CD4-positive, alpha-beta T cell (primary cell): ENCODE measurements at regions of chr6 and their contacts with region 1.

Region 1: GRCh38 chr6:152184917-152185574 is 377.6 kb downstream of the ESR1 start:
- DNase-seq: peak in 7 of 14 experiments; percentile 4 to 78 (median 42)
- ATAC-seq: peak; percentile 75
- H3K4me3 ChIP-seq: peak overlapping the region; percentile 56
- H3K4me3 Mint-ChIP-seq: peak overlapping the region; percentile 96
- H3K27ac ChIP-seq: peak overlapping the region; percentile 81 to 90
- H3K27ac Mint-ChIP-seq: peak overlapping the region; percentile 97
- H3K4me1 ChIP-seq: peaks cover 26% of the 10 kb centered on the region
- H3K4me1 Mint-ChIP-seq: peaks cover 88% of the 10 kb centered on the region
- H3K27me3 ChIP-seq: no peaks in the 10 kb centered on the region
- H3K27me3 Mint-ChIP-seq: no peaks in the 10 kb centered on the region
- CTCF ChIP-seq: no peak

Region 2: DNA sequence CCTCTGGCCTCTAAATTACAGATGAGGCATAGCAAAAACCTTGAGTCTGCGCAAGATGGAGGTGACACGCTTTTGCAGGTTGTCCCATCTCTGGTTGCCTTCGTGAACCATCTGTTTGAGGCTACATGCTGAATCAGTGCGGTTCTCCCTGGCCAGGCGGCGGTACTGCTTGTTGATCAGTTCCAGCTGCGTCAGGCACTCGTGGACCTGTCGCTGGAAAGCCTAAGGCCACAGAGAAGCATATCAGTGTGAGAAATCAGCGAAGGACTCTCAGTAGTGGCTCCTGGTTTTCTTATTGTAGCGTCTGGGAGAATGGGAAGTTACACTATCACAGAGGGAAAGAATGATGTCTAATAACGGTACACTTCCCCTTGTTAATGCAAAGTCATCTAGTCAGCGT is 33.1 kb before region 1 on chr6:
- CTCF ChIA-PET with region 1: no interaction called
- POLR2A ChIA-PET with region 1: interaction called, 15 read pairs
- intact Hi-C with region 1: no loop called
- DNase-seq: no peak
- ATAC-seq: no peak
- H3K4me3 ChIP-seq: no peak overlapping the region
- H3K4me3 Mint-ChIP-seq: no peak overlapping the region
- H3K27ac ChIP-seq: no peak overlapping the region
- H3K27ac Mint-ChIP-seq: peak overlapping the region; percentile 47
- H3K4me1 ChIP-seq: no peaks in the 10 kb centered on the region
- H3K4me1 Mint-ChIP-seq: no peaks in the 10 kb centered on the region
- H3K27me3 ChIP-seq: no peaks in the 10 kb centered on the region
- H3K27me3 Mint-ChIP-seq: no peaks in the 10 kb centered on the region
- CTCF ChIP-seq: no peak

Region 3: GRCh38 chr6:152170705-152171667 is 14.1 kb before region 1 on chr6:
- CTCF ChIA-PET with region 1: interaction called, 4 read pairs
- POLR2A ChIA-PET with region 1: interaction called, 69 read pairs
- intact Hi-C with region 1: loop called in 1 of 2 experiments (anchors 2 kb)
- DNase-seq: peak in 9 of 14 experiments; percentile 19 to 80 (median 41)
- ATAC-seq: peak; percentile 85
- H3K4me3 ChIP-seq: peak overlapping the region; percentile 26
- H3K4me3 Mint-ChIP-seq: peak overlapping the region; percentile 62
- H3K27ac ChIP-seq: peak overlapping the region; percentile 46 to 80
- H3K27ac Mint-ChIP-seq: peak overlapping the region; percentile 91
- H3K4me1 ChIP-seq: peaks cover 29% of the 10 kb centered on the region
- H3K4me1 Mint-ChIP-seq: peaks cover 74% of the 10 kb centered on the region
- H3K27me3 ChIP-seq: no peaks in the 10 kb centered on the region
- H3K27me3 Mint-ChIP-seq: no peaks in the 10 kb centered on the region
- CTCF ChIP-seq: no peak

Region 4: GRCh38 chr6:152201120-152201519 is 16.1 kb after region 1 on chr6:
- CTCF ChIA-PET with region 1: no interaction called
- POLR2A ChIA-PET with region 1: interaction called, 20 read pairs
- intact Hi-C with region 1: no loop called
- DNase-seq: no peak
- ATAC-seq: no peak
- H3K4me3 ChIP-seq: no peak overlapping the region
- H3K4me3 Mint-ChIP-seq: no peak overlapping the region
- H3K27ac ChIP-seq: no peak overlapping the region
- H3K27ac Mint-ChIP-seq: no peak overlapping the region
- H3K4me1 ChIP-seq: no peaks in the 10 kb centered on the region
- H3K4me1 Mint-ChIP-seq: peaks cover 10% of the 10 kb centered on the region
- H3K27me3 ChIP-seq: no peaks in the 10 kb centered on the region
- H3K27me3 Mint-ChIP-seq: no peaks in the 10 kb centered on the region
- CTCF ChIP-seq: no peak

Region 5: GRCh38 chr6:152232501-152233151 is 47.6 kb after region 1 on chr6:
- CTCF ChIA-PET with region 1: no interaction called
- POLR2A ChIA-PET with region 1: interaction called, 37 read pairs
- intact Hi-C with region 1: loop called in 1 of 2 experiments (anchors 2 kb)
- DNase-seq: peak in 6 of 14 experiments; percentile 5 to 32 (median 19)
- ATAC-seq: peak; percentile 56
- H3K4me3 ChIP-seq: no peak overlapping the region
- H3K4me3 Mint-ChIP-seq: peak overlapping the region; percentile 78
- H3K27ac ChIP-seq: no peak overlapping the region
- H3K27ac Mint-ChIP-seq: peak overlapping the region; percentile 82
- H3K4me1 ChIP-seq: peaks cover 16% of the 10 kb centered on the region
- H3K4me1 Mint-ChIP-seq: peaks cover 28% of the 10 kb centered on the region
- H3K27me3 ChIP-seq: no peaks in the 10 kb centered on the region
- H3K27me3 Mint-ChIP-seq: no peaks in the 10 kb centered on the region
- CTCF ChIP-seq: no peak

Region 6: DNA sequence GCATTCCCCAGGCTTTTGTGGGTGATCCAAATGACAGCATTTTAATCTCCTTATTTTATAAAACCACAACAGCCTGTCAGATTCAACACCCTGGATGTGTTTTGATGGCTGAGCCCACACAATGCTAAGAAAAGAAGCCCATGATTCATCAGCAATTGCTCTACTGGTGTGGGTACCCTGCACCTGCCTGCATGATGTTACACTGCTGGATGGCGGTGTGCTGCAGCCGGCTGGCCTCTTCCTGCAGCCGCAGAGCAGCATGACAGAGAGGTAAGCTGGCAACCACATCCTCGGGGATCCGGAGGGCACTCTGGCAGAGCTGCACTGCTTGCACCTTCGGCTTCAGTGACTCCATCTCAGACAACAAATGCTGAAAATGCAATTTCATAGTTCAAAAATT is 124.6 kb after region 1 on chr6:
- CTCF ChIA-PET with region 1: no interaction called
- POLR2A ChIA-PET with region 1: interaction called, 10 read pairs
- intact Hi-C with region 1: no loop called
- DNase-seq: peak; percentile 46 to 87 (median 72)
- ATAC-seq: peak; percentile 98
- H3K4me3 ChIP-seq: no peak overlapping the region
- H3K4me3 Mint-ChIP-seq: peak overlapping the region; percentile 36
- H3K27ac ChIP-seq: no peak overlapping the region
- H3K27ac Mint-ChIP-seq: peak overlapping the region; percentile 35
- H3K4me1 ChIP-seq: peaks cover 16% of the 10 kb centered on the region
- H3K4me1 Mint-ChIP-seq: peaks cover 36% of the 10 kb centered on the region
- H3K27me3 ChIP-seq: no peaks in the 10 kb centered on the region
- H3K27me3 Mint-ChIP-seq: no peaks in the 10 kb centered on the region
- CTCF ChIP-seq: no peak

Region 7: GRCh38 chr6:153424719-153425400 is 1239.8 kb after region 1 on chr6:
- CTCF ChIA-PET with region 1: no interaction called
- POLR2A ChIA-PET with region 1: no interaction called
- intact Hi-C with region 1: no loop called
- DNase-seq: no peak
- ATAC-seq: no peak
- H3K4me3 ChIP-seq: no peak overlapping the region
- H3K4me3 Mint-ChIP-seq: no peak overlapping the region
- H3K27ac ChIP-seq: no peak overlapping the region
- H3K27ac Mint-ChIP-seq: no peak overlapping the region
- H3K4me1 ChIP-seq: no peaks in the 10 kb centered on the region
- H3K4me1 Mint-ChIP-seq: no peaks in the 10 kb centered on the region
- H3K27me3 ChIP-seq: no peaks in the 10 kb centered on the region
- H3K27me3 Mint-ChIP-seq: no peaks in the 10 kb centered on the region
- CTCF ChIP-seq: no peak